ENCODE measurements at regions of chr16 and their contacts with region 1.

Region 1: DNA sequence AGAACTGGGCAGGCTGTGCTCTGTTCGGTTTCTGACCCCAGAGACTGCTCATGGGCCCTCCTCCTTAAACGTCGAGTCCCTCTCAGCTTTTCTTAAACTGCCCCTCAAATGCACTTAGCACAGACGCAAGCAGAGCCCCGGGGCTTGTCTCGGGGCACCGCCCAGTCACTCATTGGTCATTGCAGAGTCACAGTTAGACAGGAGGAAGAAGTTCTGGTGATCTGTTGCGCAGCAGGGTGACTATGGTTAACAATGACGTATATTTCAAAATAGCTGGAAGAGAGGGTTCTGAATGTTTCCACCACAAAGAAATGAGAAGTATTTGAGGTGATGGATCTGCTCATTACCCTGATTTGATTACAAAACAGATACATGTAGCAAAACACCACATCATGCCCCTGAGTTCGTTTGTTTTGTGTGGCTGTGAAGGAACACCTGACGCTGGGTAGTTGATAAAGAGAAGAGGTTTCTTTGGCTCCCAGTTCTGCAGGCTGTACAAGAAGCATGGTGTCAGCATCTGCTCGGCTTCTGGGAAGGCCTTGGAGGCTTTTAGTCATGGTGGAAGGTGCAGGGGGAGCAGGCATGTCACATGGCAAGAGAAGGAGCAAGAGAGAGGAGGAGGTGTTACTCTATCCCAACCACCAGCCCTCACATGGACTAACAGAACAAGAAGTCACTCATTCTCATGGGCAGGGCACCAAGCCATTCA is 387.4 kb downstream of the CPPED1 start:
- DNase-seq: no peak
- H3K4me3 Mint-ChIP-seq: no peak overlapping the region
- H3K27ac Mint-ChIP-seq: no peak overlapping the region
- H3K4me1 Mint-ChIP-seq: peaks cover 7% of the 10 kb centered on the region
- H3K27me3 Mint-ChIP-seq: no peaks in the 10 kb centered on the region

Region 2: GRCh38 chr16:12095275-12096156 is 320.8 kb before region 1 on chr16:
- intact Hi-C with region 1: loop called (anchors 10 kb)
- DNase-seq: peak; percentile 38
- H3K4me3 Mint-ChIP-seq: no peak overlapping the region
- H3K27ac Mint-ChIP-seq: no peak overlapping the region
- H3K4me1 Mint-ChIP-seq: peaks cover 5% of the 10 kb centered on the region
- H3K27me3 Mint-ChIP-seq: peaks cover 2% of the 10 kb centered on the region

Region 3: DNA sequence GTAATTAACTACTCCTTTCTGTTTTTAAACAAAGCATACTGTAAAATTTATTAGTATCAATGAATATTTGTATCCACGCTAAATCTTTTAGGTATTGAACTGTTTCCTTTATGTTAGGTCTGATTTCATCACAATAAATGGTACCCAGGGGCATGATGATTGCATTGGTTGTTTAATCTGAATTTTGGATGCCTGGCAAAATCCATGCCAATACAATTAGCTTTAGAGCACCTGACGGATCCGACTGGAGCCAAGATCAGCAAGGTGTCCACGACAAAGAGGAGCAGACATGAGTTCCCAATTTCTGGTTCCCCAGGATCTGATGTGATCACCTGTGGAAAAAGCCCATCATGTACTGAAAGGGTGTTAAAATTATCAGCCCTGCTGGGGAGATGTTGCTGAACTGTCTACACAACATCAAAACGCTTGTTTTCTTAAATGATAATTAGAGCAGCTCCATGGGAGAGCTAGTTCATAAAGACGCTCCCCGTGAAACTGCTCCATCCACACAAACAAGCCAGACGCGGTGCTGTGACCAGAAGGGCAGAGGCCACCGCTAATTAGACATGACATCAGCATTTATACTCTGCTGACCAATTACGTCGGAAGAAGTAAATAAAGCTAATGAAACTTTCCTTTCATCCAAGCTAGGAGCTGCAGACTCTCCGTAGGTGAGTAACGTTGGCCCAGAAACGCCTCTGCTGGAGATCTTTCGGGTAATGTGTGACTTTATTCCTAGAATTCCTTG is 235.7 kb after region 1 on chr16:
- intact Hi-C with region 1: no loop called
- DNase-seq: no peak
- H3K4me3 Mint-ChIP-seq: no peak overlapping the region
- H3K27ac Mint-ChIP-seq: no peak overlapping the region
- H3K4me1 Mint-ChIP-seq: peaks cover 16% of the 10 kb centered on the region
- H3K27me3 Mint-ChIP-seq: peaks cover 2% of the 10 kb centered on the region